Activated B cell treated with CpG ODN at 0.5 μM for 24 hours (primary cell): ENCODE measurements at regions of chr6 and their contacts with region 1.

Region 1: DNA sequence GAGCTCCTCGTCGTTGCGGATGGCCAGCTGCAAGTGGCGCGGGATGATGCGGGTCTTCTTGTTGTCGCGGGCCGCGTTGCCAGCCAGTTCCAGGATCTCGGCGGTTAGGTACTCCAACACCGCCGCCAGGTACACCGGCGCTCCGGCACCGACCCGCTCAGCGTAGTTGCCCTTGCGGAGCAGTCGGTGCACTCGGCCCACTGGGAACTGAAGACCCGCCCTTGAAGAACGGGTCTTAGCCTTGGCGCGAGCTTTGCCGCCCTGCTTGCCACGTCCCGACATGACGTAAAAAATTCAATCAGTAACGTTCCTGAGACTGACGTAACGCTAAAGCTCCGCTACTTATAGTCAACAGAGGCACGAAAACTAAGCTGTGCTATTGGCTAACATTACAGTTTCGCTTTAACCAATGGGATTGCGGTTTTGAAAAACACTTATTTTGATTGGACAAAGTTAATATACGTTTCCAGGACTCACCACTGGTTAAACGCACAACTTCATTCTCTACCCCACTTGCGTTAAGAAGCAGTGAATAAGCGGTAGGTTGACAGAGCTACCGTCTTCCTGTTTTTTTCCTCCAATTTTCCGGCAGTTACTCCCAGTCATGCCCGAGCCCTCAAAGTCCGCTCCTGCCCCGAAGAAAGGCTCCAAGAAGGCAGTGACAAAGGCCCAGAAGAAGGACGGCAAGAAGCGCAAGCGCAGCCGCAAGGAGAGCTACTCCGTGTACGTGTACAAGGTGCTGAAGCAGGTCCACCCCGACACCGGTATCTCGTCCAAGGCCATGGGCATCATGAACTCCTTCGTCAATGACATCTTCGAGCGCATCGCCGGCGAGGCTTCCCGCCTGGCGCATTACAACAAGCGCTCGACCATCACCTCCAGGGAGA is 73.9 kb downstream of the OR2B2 start:
- DNase-seq: peak; percentile 73
- ATAC-seq: peak; percentile 76
- H3K4me3 Mint-ChIP-seq: no peak overlapping the region
- H3K27ac Mint-ChIP-seq: no peak overlapping the region
- H3K4me1 Mint-ChIP-seq: peaks cover 18% of the 10 kb centered on the region
- H3K27me3 Mint-ChIP-seq: no peaks in the 10 kb centered on the region
- CTCF ChIP-seq: no peak

Region 2: GRCh38 chr6:26031595-26032339 is 1806.5 kb before region 1 on chr6:
- CTCF ChIA-PET with region 1: no interaction called
- POLR2A ChIA-PET with region 1: interaction called, 39 read pairs
- intact Hi-C with region 1: loop called (anchors 10 kb)
- DNase-seq: peak; percentile 55
- ATAC-seq: peak; percentile 62
- H3K4me3 Mint-ChIP-seq: peak overlapping the region; percentile 93
- H3K27ac Mint-ChIP-seq: peak overlapping the region; percentile 98
- H3K4me1 Mint-ChIP-seq: peaks cover 40% of the 10 kb centered on the region
- H3K27me3 Mint-ChIP-seq: peaks cover 2% of the 10 kb centered on the region
- CTCF ChIP-seq: no peak

Region 3: DNA sequence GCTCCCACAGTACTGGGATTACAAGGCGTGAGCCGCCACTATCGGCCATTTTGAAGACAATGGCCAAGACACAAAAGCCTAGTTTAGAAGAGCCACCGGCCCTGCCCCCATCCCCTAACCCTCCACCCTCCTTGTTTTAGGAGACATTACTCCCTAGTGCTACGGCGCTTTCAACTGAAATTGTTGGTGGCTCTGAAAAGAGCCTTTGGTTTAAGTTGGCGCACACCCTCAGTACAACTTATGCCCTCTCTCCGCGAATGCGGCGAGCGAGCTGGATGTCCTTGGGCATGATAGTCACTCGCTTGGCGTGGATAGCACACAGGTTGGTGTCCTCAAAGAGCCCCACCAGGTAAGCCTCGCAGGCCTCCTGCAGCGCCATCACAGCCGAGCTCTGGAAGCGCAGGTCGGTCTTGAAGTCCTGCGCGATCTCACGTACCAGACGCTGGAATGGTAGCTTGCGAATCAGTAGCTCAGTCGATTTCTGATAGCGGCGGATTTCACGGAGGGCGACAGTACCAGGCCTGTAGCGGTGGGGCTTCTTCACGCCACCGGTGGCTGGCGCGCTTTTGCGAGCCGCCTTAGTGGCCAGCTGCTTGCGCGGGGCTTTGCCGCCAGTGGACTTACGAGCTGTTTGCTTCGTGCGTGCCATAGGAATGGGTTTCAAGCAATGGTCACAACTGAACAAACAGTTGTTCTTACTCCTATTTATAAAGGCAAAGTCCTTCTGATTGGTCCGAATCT is 1588.2 kb before region 1 on chr6:
- CTCF ChIA-PET with region 1: no interaction called
- POLR2A ChIA-PET with region 1: interaction called, 8 read pairs
- intact Hi-C with region 1: loop called (anchors 10 kb)
- DNase-seq: peak; percentile 57
- ATAC-seq: peak; percentile 63
- H3K4me3 Mint-ChIP-seq: peak overlapping the region; percentile 94
- H3K27ac Mint-ChIP-seq: peak overlapping the region; percentile 90
- H3K4me1 Mint-ChIP-seq: peaks cover 36% of the 10 kb centered on the region
- H3K27me3 Mint-ChIP-seq: no peaks in the 10 kb centered on the region
- CTCF ChIP-seq: no peak

Region 4: DNA sequence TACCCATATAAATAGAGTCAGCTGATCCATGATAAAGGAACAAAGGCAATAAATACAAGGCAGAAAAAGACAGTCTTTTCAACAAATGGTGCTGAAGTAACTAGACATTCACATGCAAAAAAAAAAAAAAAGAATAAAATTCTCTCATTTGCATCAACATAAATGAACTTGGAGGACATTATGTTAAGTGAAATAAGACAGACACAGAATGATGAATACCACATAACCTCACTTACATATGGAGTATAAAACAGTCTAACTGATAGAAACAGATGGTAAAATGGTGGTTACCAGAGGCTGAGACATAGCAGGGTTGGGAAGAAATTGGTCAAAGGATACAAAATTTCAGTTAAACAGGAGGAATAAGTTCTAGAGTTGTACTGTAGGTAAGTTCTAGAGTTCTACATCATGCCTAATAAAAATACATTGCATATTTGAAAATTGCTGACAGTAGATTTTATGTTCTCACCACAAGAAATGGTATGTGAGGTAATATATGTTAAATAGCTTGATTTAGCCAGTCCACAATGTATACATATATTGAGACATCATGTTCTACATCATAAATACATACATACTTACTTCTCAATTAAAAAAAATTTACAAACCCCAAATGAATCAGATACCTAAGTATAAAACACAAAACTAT is 1187.0 kb before region 1 on chr6:
- CTCF ChIA-PET with region 1: no interaction called
- POLR2A ChIA-PET with region 1: no interaction called
- intact Hi-C with region 1: no loop called
- DNase-seq: no peak
- ATAC-seq: no peak
- H3K4me3 Mint-ChIP-seq: no peak overlapping the region
- H3K27ac Mint-ChIP-seq: no peak overlapping the region
- H3K4me1 Mint-ChIP-seq: peaks cover 6% of the 10 kb centered on the region
- H3K27me3 Mint-ChIP-seq: no peaks in the 10 kb centered on the region
- CTCF ChIP-seq: no peak

Region 5: DNA sequence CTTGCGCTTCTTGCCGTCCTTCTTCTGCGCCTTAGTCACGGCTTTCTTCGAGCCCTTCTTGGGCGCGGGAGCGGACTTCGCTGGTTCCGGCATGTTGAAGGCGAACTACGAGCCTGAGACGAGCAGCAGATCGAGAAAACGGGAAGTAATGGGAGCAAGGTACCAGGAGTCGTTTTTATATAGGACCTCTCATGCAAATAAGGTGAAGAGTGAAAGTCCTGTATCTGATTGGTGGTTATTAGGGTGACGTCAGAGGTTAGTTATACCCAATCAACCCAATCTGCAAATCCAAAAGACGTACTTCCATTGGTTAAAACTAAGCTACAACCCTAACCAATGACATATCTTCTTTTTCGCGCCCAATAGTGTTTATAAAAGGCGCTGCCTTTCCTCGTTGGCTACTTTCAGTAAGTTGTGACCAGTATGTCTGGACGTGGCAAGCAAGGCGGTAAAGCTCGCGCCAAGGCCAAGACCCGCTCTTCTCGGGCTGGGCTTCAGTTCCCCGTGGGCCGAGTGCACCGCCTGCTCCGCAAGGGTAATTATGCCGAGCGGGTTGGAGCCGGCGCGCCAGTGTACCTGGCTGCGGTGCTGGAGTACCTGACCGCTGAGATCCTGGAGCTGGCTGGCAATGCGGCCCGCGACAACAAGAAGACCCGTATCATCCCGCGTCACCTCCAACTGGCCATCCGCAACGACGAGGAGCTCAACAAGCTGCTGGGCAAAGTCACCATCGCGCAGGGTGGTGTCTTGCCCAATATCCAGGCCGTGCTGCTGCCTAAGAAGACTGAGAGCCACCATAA is 691.4 kb before region 1 on chr6:
- CTCF ChIA-PET with region 1: no interaction called
- POLR2A ChIA-PET with region 1: interaction called, 72 read pairs
- intact Hi-C with region 1: loop called (anchors 1 kb)
- DNase-seq: peak; percentile 70
- ATAC-seq: peak; percentile 80
- H3K4me3 Mint-ChIP-seq: no peak overlapping the region
- H3K27ac Mint-ChIP-seq: no peak overlapping the region
- H3K4me1 Mint-ChIP-seq: peaks cover 26% of the 10 kb centered on the region
- H3K27me3 Mint-ChIP-seq: no peaks in the 10 kb centered on the region
- CTCF ChIP-seq: no peak

Region 6: GRCh38 chr6:27809939-27810767 is 28.1 kb before region 1 on chr6:
- CTCF ChIA-PET with region 1: interaction called, 13 read pairs
- POLR2A ChIA-PET with region 1: interaction called, 334 read pairs
- intact Hi-C with region 1: loop called (anchors 1 kb)
- DNase-seq: peak; percentile 68
- ATAC-seq: peak; percentile 59
- H3K4me3 Mint-ChIP-seq: peak overlapping the region; percentile 93
- H3K27ac Mint-ChIP-seq: peak overlapping the region; percentile 97
- H3K4me1 Mint-ChIP-seq: peaks cover 59% of the 10 kb centered on the region
- H3K27me3 Mint-ChIP-seq: no peaks in the 10 kb centered on the region
- CTCF ChIP-seq: no peak

Region 7: DNA sequence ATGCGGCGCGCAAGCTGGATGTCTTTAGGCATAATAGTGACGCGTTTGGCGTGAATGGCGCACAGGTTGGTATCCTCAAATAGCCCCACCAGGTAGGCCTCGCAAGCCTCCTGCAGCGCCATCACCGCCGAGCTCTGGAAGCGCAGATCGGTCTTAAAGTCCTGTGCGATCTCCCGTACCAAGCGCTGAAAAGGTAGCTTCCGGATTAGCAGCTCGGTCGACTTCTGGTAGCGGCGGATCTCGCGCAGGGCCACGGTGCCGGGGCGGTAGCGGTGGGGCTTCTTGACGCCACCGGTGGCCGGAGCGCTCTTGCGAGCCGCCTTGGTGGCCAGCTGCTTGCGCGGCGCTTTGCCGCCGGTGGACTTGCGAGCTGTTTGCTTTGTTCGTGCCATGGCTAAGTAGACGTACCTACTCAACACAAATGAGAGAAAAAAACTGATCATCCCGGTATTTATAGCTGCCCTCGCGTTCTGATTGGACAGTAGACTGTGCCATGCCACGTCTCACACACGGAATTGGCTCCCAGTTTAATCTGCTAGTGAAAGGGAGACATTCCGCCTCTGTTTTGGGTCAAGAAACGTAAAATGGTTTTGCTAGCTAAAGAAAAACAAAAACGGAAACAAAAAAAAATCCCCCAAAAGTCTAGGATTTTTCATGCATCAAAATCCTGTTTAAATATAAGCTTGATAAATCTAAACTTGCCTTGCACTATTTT is 33.8 kb after region 1 on chr6:
- CTCF ChIA-PET with region 1: interaction called, 18 read pairs
- POLR2A ChIA-PET with region 1: interaction called, 1,167 read pairs
- intact Hi-C with region 1: loop called (anchors 1 kb)
- DNase-seq: peak; percentile 73
- ATAC-seq: peak; percentile 80
- H3K4me3 Mint-ChIP-seq: peak overlapping the region; percentile 94
- H3K27ac Mint-ChIP-seq: peak overlapping the region; percentile 95
- H3K4me1 Mint-ChIP-seq: peaks cover 36% of the 10 kb centered on the region
- H3K27me3 Mint-ChIP-seq: no peaks in the 10 kb centered on the region
- CTCF ChIP-seq: no peak

Region 8: DNA sequence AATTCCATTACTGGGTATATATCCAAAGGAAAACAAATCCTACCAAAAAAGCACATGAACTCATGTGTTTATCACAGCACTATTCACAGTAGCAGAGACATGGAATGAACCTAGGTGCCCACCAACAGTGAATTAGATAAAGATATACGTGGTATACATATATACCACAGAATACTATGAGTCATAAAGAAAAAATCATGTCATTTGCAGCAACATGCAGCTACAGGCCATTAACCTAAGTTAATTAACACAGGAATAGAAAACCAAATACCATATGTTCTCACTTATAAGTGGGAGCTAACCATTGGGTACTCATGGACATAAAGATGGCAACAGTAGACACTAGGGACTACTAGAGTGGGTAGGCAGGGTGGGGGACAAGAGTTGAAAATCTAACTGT is 69.7 kb after region 1 on chr6:
- CTCF ChIA-PET with region 1: no interaction called
- POLR2A ChIA-PET with region 1: no interaction called
- intact Hi-C with region 1: no loop called
- DNase-seq: no peak
- ATAC-seq: no peak
- H3K4me3 Mint-ChIP-seq: no peak overlapping the region
- H3K27ac Mint-ChIP-seq: no peak overlapping the region
- H3K4me1 Mint-ChIP-seq: peaks cover 4% of the 10 kb centered on the region
- H3K27me3 Mint-ChIP-seq: no peaks in the 10 kb centered on the region
- CTCF ChIP-seq: no peak

Region 9: GRCh38 chr6:28940858-28941680 is 1102.8 kb after region 1 on chr6:
- CTCF ChIA-PET with region 1: no interaction called
- POLR2A ChIA-PET with region 1: no interaction called
- intact Hi-C with region 1: loop called (anchors 5 kb)
- DNase-seq: peak; percentile 36
- ATAC-seq: peak; percentile 66
- H3K4me3 Mint-ChIP-seq: peak overlapping the region; percentile 95
- H3K27ac Mint-ChIP-seq: peak overlapping the region; percentile 88
- H3K4me1 Mint-ChIP-seq: peaks cover 47% of the 10 kb centered on the region
- H3K27me3 Mint-ChIP-seq: peaks cover 3% of the 10 kb centered on the region
- CTCF ChIP-seq: no peak